Psoas muscle (tissue), 8 donors: ENCODE measurements at regions of chr15 and their contacts with region 1.

Region 1: DNA sequence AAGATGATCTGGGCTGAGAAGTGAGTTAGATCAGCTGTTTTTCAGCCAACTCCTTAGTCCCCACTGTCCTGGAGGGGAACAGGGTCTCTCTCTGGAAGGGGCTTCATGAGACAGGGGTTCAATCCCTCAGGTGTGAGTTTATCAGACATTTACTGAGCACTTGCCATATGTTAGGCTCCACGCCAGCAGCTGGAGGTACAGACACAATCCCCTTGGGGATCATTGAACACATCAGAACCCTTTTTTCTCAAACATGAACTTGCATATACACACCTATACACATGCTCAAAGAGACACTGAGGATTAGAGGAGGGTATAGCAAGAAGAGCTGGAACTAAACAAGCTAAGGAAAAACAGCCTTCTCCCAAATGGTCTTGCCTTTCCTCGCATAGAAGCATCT is 5.5 kb upstream of the BMF start:
- DNase-seq: no peak
- ATAC-seq: no peak
- H3K4me3 ChIP-seq: no peak overlapping the region
- H3K27ac ChIP-seq: no peak overlapping the region
- H3K4me1 ChIP-seq: peaks cover 5% of the 10 kb centered on the region
- H3K27me3 ChIP-seq: no peaks in the 10 kb centered on the region
- CTCF ChIP-seq: no peak

Region 2: DNA sequence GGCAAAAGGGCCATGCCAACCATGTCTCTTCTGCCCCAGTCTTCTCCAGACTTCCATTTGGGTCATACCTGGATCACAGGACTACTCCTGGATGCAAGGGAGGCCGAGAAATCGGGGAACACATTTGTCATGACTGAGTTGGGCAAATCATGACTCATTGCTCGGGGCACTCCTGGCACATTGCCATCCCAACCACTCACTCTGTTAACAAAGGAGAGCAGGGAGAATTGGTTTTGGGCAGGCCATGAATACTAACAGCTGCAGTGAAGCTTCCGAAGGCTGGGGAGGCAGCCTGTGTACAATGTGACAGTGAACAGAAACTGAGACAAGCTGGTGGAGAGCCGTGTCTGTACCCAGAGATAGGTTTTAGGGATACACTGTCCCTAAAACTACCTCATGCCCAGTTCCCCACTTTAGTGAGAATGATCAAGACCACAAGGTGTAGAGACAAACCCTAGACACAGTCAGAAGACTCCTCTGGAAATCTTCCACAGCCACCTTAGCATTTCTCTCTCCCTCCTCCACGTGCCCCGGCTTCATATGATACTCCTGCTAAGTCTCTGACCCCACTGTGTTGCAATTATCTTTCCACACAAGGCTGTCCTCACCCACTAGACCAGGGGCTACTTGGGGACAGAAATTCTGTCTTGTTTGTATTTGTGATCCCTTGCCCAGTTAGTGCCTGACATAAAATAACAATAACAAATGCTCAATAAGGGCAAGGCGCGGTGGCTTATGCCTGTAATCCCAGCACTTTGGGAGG is 36.1 kb after region 1 on chr15:
- intact Hi-C with region 1: loop called (anchors 5 kb)
- DNase-seq: peak; percentile 45 to 68
- ATAC-seq: peak; percentile 84 to 96 (median 89)
- H3K4me3 ChIP-seq: no peak overlapping the region
- H3K27ac ChIP-seq: peak overlapping the region; percentile 75
- H3K4me1 ChIP-seq: peaks cover 19% of the 10 kb centered on the region
- H3K27me3 ChIP-seq: no peaks in the 10 kb centered on the region
- CTCF ChIP-seq: no peak

Region 3: GRCh38 chr15:40155270-40155910 is 41.2 kb after region 1 on chr15:
- intact Hi-C with region 1: loop called in 1 of 2 experiments (anchors 5 kb)
- DNase-seq: no peak
- ATAC-seq: no peak
- H3K4me3 ChIP-seq: no peak overlapping the region
- H3K27ac ChIP-seq: no peak overlapping the region
- H3K4me1 ChIP-seq: peaks cover 16% of the 10 kb centered on the region
- H3K27me3 ChIP-seq: no peaks in the 10 kb centered on the region
- CTCF ChIP-seq: no peak

Region 4: GRCh38 chr15:40204100-40204499 is 89.9 kb after region 1 on chr15:
- intact Hi-C with region 1: no loop called
- DNase-seq: no peak
- ATAC-seq: no peak
- H3K4me3 ChIP-seq: no peak overlapping the region
- H3K27ac ChIP-seq: no peak overlapping the region
- H3K4me1 ChIP-seq: no peaks in the 10 kb centered on the region
- H3K27me3 ChIP-seq: no peaks in the 10 kb centered on the region
- CTCF ChIP-seq: no peak

Region 5: DNA sequence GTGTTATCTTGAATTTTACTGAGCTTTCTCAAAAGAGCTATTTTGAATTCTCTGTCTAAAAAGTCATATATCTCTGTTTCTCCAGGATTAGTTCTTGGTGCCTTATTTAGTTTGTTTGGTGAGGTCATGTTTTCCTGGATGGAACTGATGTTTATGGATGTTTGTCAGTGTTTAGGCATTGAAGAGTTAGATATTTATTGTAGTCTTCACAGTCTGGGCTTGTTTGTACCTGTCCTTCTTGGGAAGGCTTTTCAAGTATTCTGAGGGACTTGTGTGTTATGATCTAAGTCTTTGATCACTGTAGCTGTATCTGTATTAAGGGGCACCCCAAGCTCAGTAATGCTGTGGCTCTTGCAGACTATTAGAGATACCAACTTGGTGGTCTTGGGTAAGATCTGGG is 570.2 kb after region 1 on chr15:
- intact Hi-C with region 1: no loop called
- DNase-seq: no peak
- ATAC-seq: no peak
- H3K4me3 ChIP-seq: no peak overlapping the region
- H3K27ac ChIP-seq: no peak overlapping the region
- H3K4me1 ChIP-seq: peaks cover 6% of the 10 kb centered on the region
- H3K27me3 ChIP-seq: no peaks in the 10 kb centered on the region
- CTCF ChIP-seq: no peak